IMR-90 (cell line): ENCODE measurements at regions of chr1 and their contacts with region 1.

Region 1: DNA sequence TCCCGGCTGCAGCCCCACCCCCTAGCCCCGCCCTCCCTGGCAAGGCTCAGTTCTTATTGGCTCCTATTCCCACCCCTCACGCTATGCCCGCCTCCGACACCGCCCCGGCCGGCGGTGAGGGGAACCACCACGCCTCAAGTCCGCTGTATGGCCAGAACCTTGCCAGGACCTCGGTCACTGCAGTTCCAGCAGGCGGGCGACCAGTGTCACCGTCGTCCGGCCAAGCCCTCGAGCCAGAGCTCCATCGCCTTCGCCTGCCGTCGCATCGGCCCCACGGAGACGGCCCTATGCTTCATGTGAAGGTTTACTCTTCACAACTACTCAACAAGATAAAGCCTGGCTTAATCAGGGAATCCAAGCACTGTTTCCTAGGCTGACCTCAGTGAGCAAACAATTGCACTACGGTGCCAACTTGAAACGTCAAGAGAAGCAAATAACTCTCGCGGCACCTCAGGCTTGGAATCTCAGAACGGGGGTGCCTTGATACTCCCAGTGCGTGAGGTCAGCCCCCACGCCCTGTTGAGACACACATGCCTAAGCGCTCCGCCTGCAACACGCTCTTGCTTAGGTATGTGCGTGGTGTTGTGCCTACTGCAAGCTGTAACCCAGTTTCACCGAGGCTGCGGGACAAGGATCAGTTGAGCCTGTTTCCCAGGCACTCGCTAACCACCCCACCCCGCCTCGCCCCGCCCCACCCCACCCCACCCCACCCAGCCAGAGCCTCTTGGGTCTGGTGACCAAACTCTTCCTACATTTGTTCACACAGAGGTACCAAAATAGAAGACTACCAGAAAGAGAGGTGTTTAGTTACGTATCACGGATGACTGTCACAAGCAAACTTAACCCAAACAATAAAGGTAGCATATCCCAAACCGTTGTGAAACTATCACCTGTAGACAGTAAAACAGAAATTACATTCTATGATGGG is 498 bp upstream of the DENND2C start:
- DNase-seq: peak; percentile 80
- ATAC-seq: peak; percentile 99
- H3K4me3 ChIP-seq: peak overlapping the region; percentile 92
- H3K27ac ChIP-seq: no peak overlapping the region
- H3K4me1 ChIP-seq: no peaks in the 10 kb centered on the region
- H3K27me3 ChIP-seq: peaks cover 5% of the 10 kb centered on the region
- CTCF ChIP-seq: no peak
- POLR2A ChIP-seq: peak; percentile 59; the same call in 1 of the 2 replicates
- RAD21 ChIP-seq: no peak

Region 2: GRCh38 chr1:114620419-114620818 is 49.9 kb before region 1 on chr1:
- CTCF ChIA-PET with region 1: interaction called, 4 read pairs
- POLR2A ChIA-PET with region 1: no interaction called
- dilution Hi-C with region 1: no loop called
- in situ Hi-C with region 1: no loop called
- intact Hi-C with region 1: loop called (anchors 5 kb)
- DNase-seq: no peak
- ATAC-seq: no peak
- H3K4me3 ChIP-seq: no peak overlapping the region
- H3K27ac ChIP-seq: no peak overlapping the region
- H3K4me1 ChIP-seq: no peaks in the 10 kb centered on the region
- H3K27me3 ChIP-seq: no peaks in the 10 kb centered on the region
- CTCF ChIP-seq: no peak
- POLR2A ChIP-seq: no peak
- RAD21 ChIP-seq: no peak